H1 (cell line): ENCODE measurements at regions of chr5 and their contacts with region 1.

Region 1: DNA sequence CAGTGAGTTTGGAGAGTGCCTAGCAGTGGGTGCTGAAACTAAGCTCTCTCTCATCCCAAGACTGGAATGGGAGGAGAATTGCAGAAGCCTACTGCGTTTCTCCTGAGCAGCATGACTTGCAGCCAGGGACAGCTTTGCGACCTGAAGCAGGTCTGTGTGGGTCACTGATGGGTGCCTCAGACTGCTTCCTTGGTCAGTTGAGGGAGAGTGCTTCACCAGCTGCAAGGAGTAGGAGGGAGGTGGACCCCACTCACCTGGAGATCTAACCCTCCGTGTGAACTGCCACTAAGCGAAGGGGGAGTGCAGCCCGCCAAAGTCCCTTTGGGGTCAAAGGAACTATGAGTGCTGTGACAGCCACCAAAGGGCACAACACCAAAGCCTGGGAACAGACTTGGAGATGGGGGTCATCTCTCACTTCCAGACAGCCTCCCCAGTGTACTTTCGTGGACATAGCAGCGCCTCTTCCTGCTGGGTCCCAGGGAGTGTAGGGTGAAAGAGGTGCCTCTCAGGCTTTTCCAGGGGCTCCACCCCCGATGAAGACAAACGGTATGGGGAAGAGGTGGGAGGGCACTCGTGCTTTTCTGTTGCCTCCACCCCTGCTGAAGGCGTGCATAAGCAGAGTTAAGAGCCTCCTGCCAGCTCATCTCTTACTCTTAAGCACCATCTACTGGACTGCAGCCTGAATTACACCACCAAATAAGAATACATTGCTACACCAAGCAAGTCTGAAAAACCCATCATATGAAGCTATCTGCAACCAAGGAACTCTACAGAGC is 34.3 kb upstream of the MACIR start:
- DNase-seq: peak; percentile 66 to 68
- H3K4me3 ChIP-seq: peak overlapping the region in 1 of 4 experiments; percentile 26; a peak in 2 of 8 replicates
- H3K27ac ChIP-seq: no peak overlapping the region
- H3K4me1 ChIP-seq: peaks cover 0 to 4% (median 3%) of the 10 kb centered on the region in 4 experiments; a peak in 5 of 7 replicates
- H3K27me3 ChIP-seq: no peaks in the 10 kb centered on the region
- CTCF ChIP-seq: peak in 2 of 3 experiments; percentile 61 to 90; a peak in 3 of 4 replicates
- EP300 ChIP-seq: no peak
- POLR2A ChIP-seq: no peak
- RAD21 ChIP-seq: peak; percentile 86 to 87

Region 2: GRCh38 chr5:102681407-102681983 is 542.8 kb before region 1 on chr5:
- CTCF ChIA-PET with region 1: interaction called, 11 read pairs
- POLR2A ChIA-PET with region 1: no interaction called
- DNase-seq: peak; percentile 2 to 79
- H3K4me3 ChIP-seq: no peak overlapping the region
- H3K27ac ChIP-seq: no peak overlapping the region
- H3K4me1 ChIP-seq: no peaks in the 10 kb centered on the region
- H3K27me3 ChIP-seq: no peaks in the 10 kb centered on the region
- CTCF ChIP-seq: peak; percentile 73 to 89 (median 81)
- EP300 ChIP-seq: no peak
- POLR2A ChIP-seq: no peak
- RAD21 ChIP-seq: peak; percentile 89 to 92

Region 3: GRCh38 chr5:103003872-103004271 is 220.4 kb before region 1 on chr5:
- CTCF ChIA-PET with region 1: no interaction called
- POLR2A ChIA-PET with region 1: no interaction called
- DNase-seq: no peak
- H3K4me3 ChIP-seq: no peak overlapping the region
- H3K27ac ChIP-seq: no peak overlapping the region
- H3K4me1 ChIP-seq: no peaks in the 10 kb centered on the region
- H3K27me3 ChIP-seq: no peaks in the 10 kb centered on the region
- CTCF ChIP-seq: no peak
- EP300 ChIP-seq: no peak
- POLR2A ChIP-seq: no peak
- RAD21 ChIP-seq: no peak

Region 4: DNA sequence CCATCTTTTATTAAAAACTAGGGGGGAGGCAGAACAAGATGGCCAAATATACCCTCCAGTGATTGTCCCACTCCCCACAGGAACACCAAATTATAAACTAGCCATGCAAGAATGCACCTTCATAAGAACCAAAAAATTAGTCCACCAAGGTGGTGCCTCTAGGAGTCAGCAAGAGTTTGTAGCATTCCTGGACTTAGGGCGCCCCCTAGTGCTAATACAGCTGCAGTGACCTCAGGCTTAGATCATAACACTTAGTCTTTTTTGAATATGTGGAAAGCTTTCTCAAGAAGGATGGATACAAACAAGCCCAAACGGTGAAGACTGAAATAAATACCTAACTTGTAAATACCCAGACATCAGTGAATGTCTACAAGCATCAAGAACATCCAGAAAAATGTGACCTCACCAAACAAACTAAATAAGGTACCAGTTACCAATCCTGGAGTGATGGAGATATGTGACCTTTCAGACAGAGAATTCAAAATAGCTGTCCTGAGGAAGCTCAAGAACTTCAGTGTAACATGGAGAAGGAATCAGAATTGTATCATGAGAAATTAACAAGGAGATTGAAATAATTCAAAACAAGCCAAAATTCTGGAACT is 84.9 kb before region 1 on chr5:
- CTCF ChIA-PET with region 1: interaction called, 17 read pairs
- POLR2A ChIA-PET with region 1: no interaction called
- DNase-seq: peak in 1 of 2 experiments; percentile 81
- H3K4me3 ChIP-seq: no peak overlapping the region
- H3K27ac ChIP-seq: no peak overlapping the region
- H3K4me1 ChIP-seq: no peaks in the 10 kb centered on the region
- H3K27me3 ChIP-seq: no peaks in the 10 kb centered on the region
- CTCF ChIP-seq: peak; percentile 20 to 92 (median 88)
- EP300 ChIP-seq: no peak
- POLR2A ChIP-seq: no peak
- RAD21 ChIP-seq: peak; percentile 98

Region 5: GRCh38 chr5:103211576-103212561 is 12.4 kb before region 1 on chr5:
- CTCF ChIA-PET with region 1: interaction called, 71 read pairs
- POLR2A ChIA-PET with region 1: interaction called, 4 read pairs
- DNase-seq: no peak
- H3K4me3 ChIP-seq: no peak overlapping the region
- H3K27ac ChIP-seq: no peak overlapping the region
- H3K4me1 ChIP-seq: no peaks in the 10 kb centered on the region; a peak in 1 of 7 replicates
- H3K27me3 ChIP-seq: no peaks in the 10 kb centered on the region
- CTCF ChIP-seq: no peak
- EP300 ChIP-seq: no peak
- POLR2A ChIP-seq: no peak
- RAD21 ChIP-seq: no peak

Region 6: GRCh38 chr5:103475629-103476240 is 251.4 kb after region 1 on chr5:
- CTCF ChIA-PET with region 1: interaction called, 22 read pairs
- POLR2A ChIA-PET with region 1: no interaction called
- DNase-seq: no peak
- H3K4me3 ChIP-seq: no peak overlapping the region
- H3K27ac ChIP-seq: no peak overlapping the region
- H3K4me1 ChIP-seq: peaks cover 0 to 4% (median 0%) of the 10 kb centered on the region in 4 experiments; a peak in 1 of 7 replicates
- H3K27me3 ChIP-seq: no peaks in the 10 kb centered on the region
- CTCF ChIP-seq: peak in 2 of 3 experiments; percentile 34 to 53; a peak in 2 of 4 replicates
- EP300 ChIP-seq: no peak
- POLR2A ChIP-seq: no peak
- RAD21 ChIP-seq: peak; percentile 80 to 87